Cardiac septum (tissue), 1 donor: ENCODE measurements at regions of chr1 and their contacts with region 1.

Region 1: GRCh38 chr1:52141513-52142219 is at the start of gene ZFYVE9:
- DNase-seq: peak; percentile 85
- total RNA-seq, gene ZFYVE9: 15.5 TPM

Region 2: GRCh38 chr1:52237430-52237829 is 95.8 kb after region 1 on chr1:
- intact Hi-C with region 1: no loop called
- DNase-seq: no peak

Region 3: GRCh38 chr1:52296345-52296744 is 154.7 kb after region 1 on chr1:
- intact Hi-C with region 1: loop called (anchors 5 kb)
- DNase-seq: no peak

Region 4: GRCh38 chr1:52365746-52366516 is 224.3 kb after region 1 on chr1 and contains the start of gene CC2D1B:
- intact Hi-C with region 1: loop called (anchors 2 kb)
- DNase-seq: peak; percentile 99
- total RNA-seq, gene CC2D1B: 19.5 TPM